Activated CD4-positive, alpha-beta T cell treated with anti-CD3 and anti-CD28 coated beads, Interleukin-2, amount 10 ng/mL, durations not matched to agents 7 days and 5 days (primary cell): ENCODE measurements at regions of chr20 and their contacts with region 1.

Region 1: DNA sequence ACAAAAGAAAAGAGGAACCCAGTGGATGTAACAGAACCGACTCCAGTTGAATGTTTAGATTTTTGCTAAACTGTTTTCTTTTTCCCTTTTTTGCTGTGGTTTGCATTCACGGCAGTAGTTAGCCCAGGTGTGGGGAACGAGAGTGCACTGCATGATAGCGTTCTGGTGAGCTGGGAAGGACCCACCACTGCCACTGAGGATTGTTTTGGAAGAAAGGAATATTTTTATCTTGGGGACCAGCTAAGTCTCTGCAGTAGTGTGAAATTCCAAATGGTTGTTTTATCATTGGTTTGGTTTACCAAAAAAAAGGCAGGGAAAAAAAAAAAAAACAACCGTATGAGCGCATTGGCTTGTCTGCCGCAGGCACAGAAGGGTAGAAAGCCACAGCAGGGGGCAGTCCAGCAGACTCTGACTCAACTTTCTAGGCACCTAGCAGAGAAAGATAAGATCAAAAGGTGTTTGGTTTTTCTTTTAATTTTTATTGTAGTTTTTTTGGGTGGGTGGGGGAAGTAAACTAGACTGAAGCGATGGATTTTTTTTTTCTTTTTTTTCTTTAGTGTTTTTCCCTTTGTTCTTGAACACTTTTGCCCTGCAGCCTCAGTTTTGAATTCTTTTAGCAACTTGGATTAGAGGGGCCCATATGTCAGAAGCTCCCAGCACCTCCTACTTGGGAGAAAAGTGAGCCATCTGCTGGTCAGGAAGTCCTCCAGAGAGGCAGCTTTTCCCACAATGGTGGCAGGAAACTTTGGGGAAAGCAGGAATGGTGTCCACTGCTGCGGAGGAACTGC is 13.5 kb upstream of the RAB5IF start:
- DNase-seq: peak; percentile 49
- H3K4me3 Mint-ChIP-seq: peak overlapping the region; percentile 61
- H3K27ac Mint-ChIP-seq: peak overlapping the region; percentile 89
- H3K4me1 Mint-ChIP-seq: peaks cover 67% of the 10 kb centered on the region
- H3K27me3 Mint-ChIP-seq: no peaks in the 10 kb centered on the region

Region 2: DNA sequence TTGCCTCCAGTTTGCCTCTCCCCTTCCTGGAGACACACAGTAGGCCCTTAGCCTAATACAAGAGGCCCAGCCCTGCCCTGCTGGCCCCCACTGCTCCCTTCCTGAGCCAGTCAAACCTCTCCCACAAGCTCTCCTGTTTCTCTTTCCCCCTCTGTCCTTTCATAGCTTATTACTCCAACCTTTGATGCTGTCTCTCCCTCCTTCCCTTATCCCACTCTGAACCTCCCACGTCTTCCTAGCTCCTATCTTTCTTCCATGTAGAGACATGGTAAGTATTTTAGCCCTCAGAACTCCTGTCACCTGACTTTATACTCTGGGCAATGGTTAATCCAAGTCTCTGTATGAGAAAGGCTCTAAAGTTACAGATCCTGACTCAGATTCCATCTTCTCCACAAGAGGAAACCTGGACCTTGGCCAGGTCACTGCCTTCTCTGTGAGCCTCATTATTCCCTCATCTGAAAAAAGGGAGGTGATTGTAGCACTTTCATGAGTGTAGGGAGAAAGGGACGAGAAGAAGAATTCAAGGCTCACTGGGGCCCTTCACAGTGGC is 12.0 kb before region 1 on chr20:
- CTCF ChIA-PET with region 1: interaction called, 13 read pairs
- POLR2A ChIA-PET with region 1: no interaction called
- DNase-seq: no peak
- H3K4me3 Mint-ChIP-seq: no peak overlapping the region
- H3K27ac Mint-ChIP-seq: peak overlapping the region; percentile 6
- H3K4me1 Mint-ChIP-seq: peaks cover 44% of the 10 kb centered on the region
- H3K27me3 Mint-ChIP-seq: no peaks in the 10 kb centered on the region

Region 3: GRCh38 chr20:36666181-36666740 is 74.2 kb after region 1 on chr20:
- CTCF ChIA-PET with region 1: no interaction called
- POLR2A ChIA-PET with region 1: no interaction called
- DNase-seq: no peak
- H3K4me3 Mint-ChIP-seq: no peak overlapping the region
- H3K27ac Mint-ChIP-seq: peak overlapping the region; percentile 33
- H3K4me1 Mint-ChIP-seq: peaks cover 5% of the 10 kb centered on the region
- H3K27me3 Mint-ChIP-seq: no peaks in the 10 kb centered on the region

Region 4: GRCh38 chr20:36684747-36685146 is 92.7 kb after region 1 on chr20:
- CTCF ChIA-PET with region 1: no interaction called
- POLR2A ChIA-PET with region 1: no interaction called
- DNase-seq: no peak
- H3K4me3 Mint-ChIP-seq: no peak overlapping the region
- H3K27ac Mint-ChIP-seq: no peak overlapping the region
- H3K4me1 Mint-ChIP-seq: peaks cover 6% of the 10 kb centered on the region
- H3K27me3 Mint-ChIP-seq: no peaks in the 10 kb centered on the region